Naive thymus-derived CD4-positive, alpha-beta T cell (primary cell): ENCODE measurements at regions of chr6 and their contacts with region 1.

Region 1: DNA sequence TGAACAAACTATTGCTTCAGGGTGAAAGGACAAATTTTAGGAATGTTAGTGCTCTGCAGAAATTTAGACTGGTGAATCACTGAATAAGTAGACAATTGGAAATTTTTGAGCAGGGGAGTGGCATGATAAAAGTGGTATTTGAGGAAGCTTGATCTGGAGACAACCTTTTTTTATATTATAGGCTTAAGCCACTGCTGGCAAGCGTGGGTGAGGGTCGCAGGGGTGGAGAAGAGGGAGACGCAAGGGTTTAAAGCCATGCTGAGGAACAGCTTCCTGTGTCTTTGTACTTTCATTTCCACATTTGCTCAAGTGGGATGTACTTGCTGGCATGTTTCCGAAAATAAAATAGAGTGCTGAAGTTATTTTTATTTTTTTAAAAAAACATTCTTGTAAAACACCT is 23.7 kb downstream of the NCOA7 start:
- DNase-seq: no peak
- ATAC-seq: no peak
- H3K4me3 ChIP-seq: no peak overlapping the region
- H3K4me3 Mint-ChIP-seq: peak overlapping the region in 9 of 10 donors; percentile 6 to 69 (median 53)
- H3K27ac ChIP-seq: no peak overlapping the region
- H3K27ac Mint-ChIP-seq: peak overlapping the region in 5 of 9 donors; percentile 22 to 90 (median 82)
- H3K4me1 ChIP-seq: peaks cover 0 to 5% of the 10 kb centered on the region in 2 donors
- H3K4me1 Mint-ChIP-seq: peaks cover 21 to 67% (median 45%) of the 10 kb centered on the region in 7 donors
- H3K27me3 ChIP-seq: no peaks in the 10 kb centered on the region
- H3K27me3 Mint-ChIP-seq: no peaks in the 10 kb centered on the region

Region 2: GRCh38 chr6:125732398-125732797 is 82.1 kb before region 1 on chr6:
- CTCF ChIA-PET with region 1: no interaction called
- POLR2A ChIA-PET with region 1: no interaction called
- intact Hi-C with region 1: no loop called
- DNase-seq: no peak
- ATAC-seq: no peak
- H3K4me3 ChIP-seq: no peak overlapping the region
- H3K4me3 Mint-ChIP-seq: no peak overlapping the region
- H3K27ac ChIP-seq: no peak overlapping the region
- H3K27ac Mint-ChIP-seq: no peak overlapping the region
- H3K4me1 ChIP-seq: peaks cover 0 to 4% of the 10 kb centered on the region in 2 donors
- H3K4me1 Mint-ChIP-seq: no peaks in the 10 kb centered on the region
- H3K27me3 ChIP-seq: peaks cover 0 to 9% of the 10 kb centered on the region in 2 donors
- H3K27me3 Mint-ChIP-seq: peaks cover 20 to 57% (median 39%) of the 10 kb centered on the region in 5 donors

Region 3: GRCh38 chr6:125798734-125799508 is 15.6 kb before region 1 on chr6:
- CTCF ChIA-PET with region 1: no interaction called
- POLR2A ChIA-PET with region 1: no interaction called
- intact Hi-C with region 1: loop called in 1 of 2 experiments (anchors 2 kb)
- DNase-seq: no peak
- ATAC-seq: peak; percentile 51
- H3K4me3 ChIP-seq: no peak overlapping the region
- H3K4me3 Mint-ChIP-seq: no peak overlapping the region
- H3K27ac ChIP-seq: no peak overlapping the region
- H3K27ac Mint-ChIP-seq: peak overlapping the region in 1 of 9 donors; percentile 34
- H3K4me1 ChIP-seq: peaks cover 1 to 4% of the 10 kb centered on the region in 2 donors
- H3K4me1 Mint-ChIP-seq: peaks cover 27 to 54% (median 40%) of the 10 kb centered on the region in 7 donors
- H3K27me3 ChIP-seq: no peaks in the 10 kb centered on the region
- H3K27me3 Mint-ChIP-seq: no peaks in the 10 kb centered on the region